PC-9 (cell line): ENCODE measurements at regions of chr7 and their contacts with region 1.

Region 1: DNA sequence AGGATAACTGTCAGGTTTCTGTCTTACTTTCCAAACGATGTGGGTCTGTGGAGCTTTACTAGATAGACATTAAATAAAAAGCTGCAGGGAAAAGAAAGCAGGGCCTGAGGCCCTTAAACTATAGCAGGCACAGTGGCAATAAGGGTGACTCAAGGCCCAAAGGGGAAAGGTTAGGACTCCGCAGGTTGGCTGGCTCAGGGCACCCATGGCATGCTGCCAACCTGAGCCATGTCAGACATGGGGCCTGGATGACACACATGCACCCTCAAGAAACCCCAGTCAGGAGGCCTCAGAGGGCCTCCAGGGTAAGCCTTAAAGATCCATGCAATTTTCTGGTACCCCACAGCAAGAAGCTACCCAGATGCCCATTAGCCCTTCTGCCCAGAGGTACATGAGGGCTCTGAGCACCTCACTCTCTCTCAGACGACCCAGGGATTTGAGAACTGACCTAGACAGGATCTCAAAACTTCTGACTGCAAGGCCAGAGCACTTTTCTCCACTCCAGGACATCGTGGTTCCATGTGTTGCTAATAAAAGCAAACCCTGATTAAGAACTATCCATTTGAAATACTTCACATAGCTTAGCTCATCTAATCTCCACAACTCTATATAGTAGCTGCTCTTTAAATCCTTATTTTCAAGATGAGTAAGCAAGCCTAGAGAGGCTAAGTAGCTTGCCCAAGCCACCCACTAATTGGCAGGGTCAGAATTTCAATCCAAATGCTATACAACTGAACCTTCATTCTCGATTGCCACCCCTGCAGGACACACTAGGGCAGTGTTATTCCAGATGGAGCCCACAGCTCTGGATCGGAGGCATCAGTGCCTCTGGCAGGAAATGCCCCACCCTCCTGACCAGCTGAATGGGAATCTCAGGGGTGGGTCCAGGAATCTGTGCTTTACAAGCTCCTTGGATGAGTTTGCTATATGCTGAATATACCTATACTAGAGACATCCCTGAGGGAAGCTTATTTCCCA is 132.5 kb upstream of the EFCAB10 start:
- DNase-seq: peak; percentile 43 to 56
- H3K4me3 ChIP-seq: no peak overlapping the region
- H3K27ac ChIP-seq: no peak overlapping the region
- H3K4me1 ChIP-seq: peaks cover 33% of the 10 kb centered on the region
- H3K27me3 ChIP-seq: no peaks in the 10 kb centered on the region
- CTCF ChIP-seq: no peak

Region 2: GRCh38 chr7:105652359-105652993 is 61.3 kb before region 1 on chr7:
- CTCF ChIA-PET with region 1: no interaction called
- POLR2A ChIA-PET with region 1: no interaction called
- intact Hi-C with region 1: loop called (anchors 2 kb)
- DNase-seq: peak; percentile 43 to 79
- H3K4me3 ChIP-seq: no peak overlapping the region
- H3K27ac ChIP-seq: no peak overlapping the region
- H3K4me1 ChIP-seq: peaks cover 47% of the 10 kb centered on the region
- H3K27me3 ChIP-seq: no peaks in the 10 kb centered on the region
- CTCF ChIP-seq: peak; percentile 87

Region 3: GRCh38 chr7:105664816-105665525 is 48.8 kb before region 1 on chr7:
- CTCF ChIA-PET with region 1: no interaction called
- POLR2A ChIA-PET with region 1: interaction called, 3 read pairs
- intact Hi-C with region 1: loop called (anchors 1 kb)
- DNase-seq: peak; percentile 80 to 87
- H3K4me3 ChIP-seq: no peak overlapping the region
- H3K27ac ChIP-seq: no peak overlapping the region
- H3K4me1 ChIP-seq: peaks cover 16% of the 10 kb centered on the region
- H3K27me3 ChIP-seq: no peaks in the 10 kb centered on the region
- CTCF ChIP-seq: no peak

Region 4: DNA sequence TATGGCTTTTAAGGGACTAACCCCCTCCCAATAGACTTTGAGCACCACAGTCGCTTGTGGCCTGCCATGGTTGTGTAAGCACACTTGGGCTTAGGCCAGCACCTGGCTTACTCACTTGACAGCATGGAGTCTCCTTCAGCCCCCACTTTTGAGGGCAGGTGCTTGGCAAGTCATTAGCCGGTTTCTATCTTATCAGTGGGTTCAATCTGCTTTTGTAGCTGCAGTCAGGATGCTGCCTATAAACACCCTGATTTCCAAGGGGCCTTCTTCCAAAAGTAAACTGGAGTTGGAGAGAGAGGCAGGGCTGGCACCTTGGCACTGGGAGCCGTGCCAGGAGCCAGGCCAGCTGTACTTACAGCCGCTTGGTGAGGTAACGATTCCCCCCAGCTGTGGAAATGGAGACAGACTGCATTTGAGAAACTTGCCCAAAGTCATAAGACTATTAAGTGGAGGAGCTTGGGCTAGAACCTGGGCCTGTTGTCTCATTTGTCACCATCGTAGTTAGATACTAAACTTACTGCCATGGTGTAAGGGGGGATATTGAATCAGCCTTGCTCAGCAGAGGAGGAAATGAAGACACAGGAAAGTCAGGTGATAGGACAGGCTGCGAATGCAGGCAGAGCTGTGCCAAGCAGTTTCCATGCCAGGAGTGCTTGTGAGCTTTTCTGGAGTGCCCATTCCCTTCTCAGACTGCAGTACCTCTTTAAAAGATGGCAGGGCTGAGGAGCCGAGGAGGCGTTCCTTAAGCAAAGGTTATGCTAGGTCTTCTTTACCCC is 40.2 kb before region 1 on chr7:
- CTCF ChIA-PET with region 1: no interaction called
- POLR2A ChIA-PET with region 1: no interaction called
- intact Hi-C with region 1: loop called (anchors 1 kb)
- DNase-seq: peak; percentile 64 to 80
- H3K4me3 ChIP-seq: no peak overlapping the region
- H3K27ac ChIP-seq: no peak overlapping the region
- H3K4me1 ChIP-seq: peaks cover 15% of the 10 kb centered on the region
- H3K27me3 ChIP-seq: no peaks in the 10 kb centered on the region
- CTCF ChIP-seq: no peak

Region 5: GRCh38 chr7:105691733-105692564 is 21.8 kb before region 1 on chr7:
- CTCF ChIA-PET with region 1: no interaction called
- POLR2A ChIA-PET with region 1: interaction called, 3 read pairs
- intact Hi-C with region 1: loop called (anchors 1 kb)
- DNase-seq: peak; percentile 69 to 81
- H3K4me3 ChIP-seq: peak overlapping the region; percentile 35; the same call in 1 of the 2 replicates
- H3K27ac ChIP-seq: no peak overlapping the region
- H3K4me1 ChIP-seq: peaks cover 4% of the 10 kb centered on the region; the same call in 1 of the 2 replicates
- H3K27me3 ChIP-seq: no peaks in the 10 kb centered on the region
- CTCF ChIP-seq: no peak

Region 6: DNA sequence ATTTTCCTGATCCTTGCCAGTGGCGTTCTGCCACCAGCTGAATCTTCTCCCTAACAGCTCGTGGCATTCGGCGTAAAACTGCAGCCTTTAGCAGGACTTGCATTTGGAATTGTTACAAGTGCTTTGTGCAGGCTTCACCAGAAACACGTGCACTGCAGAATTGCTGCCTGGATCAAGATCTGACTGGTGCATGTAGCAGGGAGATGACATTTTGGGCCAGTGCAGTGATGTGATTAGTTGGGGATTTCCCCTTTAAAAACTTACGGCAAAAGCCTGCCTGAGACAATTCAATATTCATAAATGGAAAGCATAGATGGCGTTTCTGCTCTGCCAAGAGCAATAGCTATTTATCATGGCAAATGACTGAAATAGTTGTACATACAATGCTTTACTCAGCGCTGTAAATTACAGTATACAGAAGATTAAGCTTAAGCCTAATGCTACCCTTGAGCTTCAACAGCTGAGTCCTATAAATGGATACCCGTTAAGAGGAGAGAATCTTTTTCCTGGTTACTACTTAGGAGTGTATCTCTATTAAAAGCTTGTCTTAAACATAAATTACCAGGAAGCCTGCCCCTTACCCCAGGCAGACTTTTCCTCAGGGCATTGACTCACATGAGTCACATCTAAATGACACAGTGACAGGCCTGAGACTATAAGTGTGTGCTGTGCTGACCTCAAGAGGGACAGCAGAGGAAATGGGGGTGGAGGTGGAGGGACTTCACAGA is 56.3 kb after region 1 on chr7:
- CTCF ChIA-PET with region 1: interaction called, 11 read pairs
- POLR2A ChIA-PET with region 1: no interaction called
- intact Hi-C with region 1: no loop called
- DNase-seq: peak; percentile 58 to 93
- H3K4me3 ChIP-seq: no peak overlapping the region; the same call in 1 of the 2 replicates
- H3K27ac ChIP-seq: peak overlapping the region; percentile 45
- H3K4me1 ChIP-seq: peaks cover 28% of the 10 kb centered on the region
- H3K27me3 ChIP-seq: no peaks in the 10 kb centered on the region
- CTCF ChIP-seq: no peak

Region 7: GRCh38 chr7:105776058-105776751 is 62.4 kb after region 1 on chr7:
- CTCF ChIA-PET with region 1: no interaction called
- POLR2A ChIA-PET with region 1: no interaction called
- intact Hi-C with region 1: loop called (anchors 1 kb)
- DNase-seq: peak; percentile 96 to 99
- H3K4me3 ChIP-seq: no peak overlapping the region
- H3K27ac ChIP-seq: peak overlapping the region; percentile 87
- H3K4me1 ChIP-seq: peaks cover 33% of the 10 kb centered on the region
- H3K27me3 ChIP-seq: no peaks in the 10 kb centered on the region
- CTCF ChIP-seq: no peak